ENCODE measurements at regions of chr11 and their contacts with region 1.

Region 1: DNA sequence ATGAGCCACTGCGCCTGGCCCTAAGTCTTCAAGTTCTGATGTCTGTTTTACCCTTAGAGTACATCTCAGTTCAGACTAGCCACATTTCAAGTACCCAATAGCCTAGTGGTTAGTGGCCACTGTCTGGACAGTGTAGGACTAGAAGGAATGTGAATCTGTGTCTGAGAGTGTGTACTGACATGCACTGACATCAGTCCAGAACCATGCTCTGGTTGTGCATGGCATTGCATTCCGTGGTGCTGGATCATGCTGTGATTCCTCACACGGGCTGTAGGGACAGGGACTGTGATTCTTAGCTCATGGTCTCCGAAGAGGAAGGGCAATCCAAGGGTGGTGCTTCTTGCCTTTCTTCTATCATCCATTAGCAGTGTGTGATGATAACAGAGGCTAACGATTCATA is 41.1 kb downstream of the AMOTL1 start:
- DNase-seq: no peak
- ATAC-seq: no peak
- H3K4me3 ChIP-seq: no peak overlapping the region
- H3K4me3 Mint-ChIP-seq: no peak overlapping the region
- H3K27ac ChIP-seq: no peak overlapping the region
- H3K27ac Mint-ChIP-seq: no peak overlapping the region
- H3K4me1 ChIP-seq: no peaks in the 10 kb centered on the region
- H3K4me1 Mint-ChIP-seq: no peaks in the 10 kb centered on the region
- H3K27me3 ChIP-seq: no peaks in the 10 kb centered on the region
- H3K27me3 Mint-ChIP-seq: peaks cover 0 to 2% of the 10 kb centered on the region in 2 donors

Region 2: DNA sequence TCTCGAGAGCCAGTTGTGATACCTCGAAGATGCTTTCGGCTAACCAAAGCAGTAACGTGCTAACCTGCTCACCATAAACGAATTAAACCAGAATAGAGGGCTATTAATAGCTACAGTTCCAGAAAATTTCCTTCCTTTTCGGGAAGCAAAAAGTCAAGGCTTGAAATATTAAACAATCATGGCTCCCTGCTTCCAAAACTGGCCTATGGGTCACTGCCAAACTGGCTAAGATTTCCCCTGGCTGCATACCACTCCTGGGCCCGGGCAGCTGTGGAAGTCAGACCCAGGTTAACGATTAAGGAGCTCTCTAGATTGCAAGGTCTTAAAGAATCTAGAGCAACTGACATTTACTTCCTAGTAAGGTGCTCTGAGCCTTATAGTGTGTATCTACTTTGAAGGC is 39.4 kb before region 1 on chr11:
- CTCF ChIA-PET with region 1: interaction called in 1 of 2 experiments, 13 read pairs
- POLR2A ChIA-PET with region 1: no interaction called
- DNase-seq: no peak
- ATAC-seq: no peak
- H3K4me3 ChIP-seq: peak overlapping the region in 1 of 2 donors; percentile 87
- H3K4me3 Mint-ChIP-seq: peak overlapping the region in 1 of 3 donors; percentile 52
- H3K27ac ChIP-seq: no peak overlapping the region
- H3K27ac Mint-ChIP-seq: no peak overlapping the region
- H3K4me1 ChIP-seq: peaks cover 0 to 12% of the 10 kb centered on the region in 2 experiments
- H3K4me1 Mint-ChIP-seq: peaks cover 8 to 12% (median 10%) of the 10 kb centered on the region in 3 donors
- H3K27me3 ChIP-seq: peaks cover 6 to 30% of the 10 kb centered on the region in 2 experiments
- H3K27me3 Mint-ChIP-seq: peaks cover 37 to 52% of the 10 kb centered on the region in 2 donors

Region 3: GRCh38 chr11:94938095-94939055 is 129.1 kb after region 1 on chr11:
- CTCF ChIA-PET with region 1: no interaction called
- POLR2A ChIA-PET with region 1: no interaction called
- DNase-seq: no peak
- ATAC-seq: no peak
- H3K4me3 ChIP-seq: no peak overlapping the region
- H3K4me3 Mint-ChIP-seq: no peak overlapping the region
- H3K27ac ChIP-seq: no peak overlapping the region
- H3K27ac Mint-ChIP-seq: no peak overlapping the region
- H3K4me1 ChIP-seq: peaks cover 20% of the 10 kb centered on the region in 2 experiments
- H3K4me1 Mint-ChIP-seq: peaks cover 27 to 38% (median 30%) of the 10 kb centered on the region in 3 donors
- H3K27me3 ChIP-seq: peaks cover 0 to 5% of the 10 kb centered on the region in 2 experiments
- H3K27me3 Mint-ChIP-seq: peaks cover 0 to under 1% of the 10 kb centered on the region in 2 donors